Panc1 (cell line): ENCODE measurements at regions of chr3 and their contacts with region 1.

Region 1: GRCh38 chr3:136752422-136753325 is 496 bp upstream of the STAG1 start:
- DNase-seq: peak; percentile 91
- ATAC-seq: peak; percentile 91
- H3K4me3 ChIP-seq: peak overlapping the region; percentile 65 to 89
- H3K27ac ChIP-seq: peak overlapping the region; percentile 100
- H3K4me1 ChIP-seq: peaks cover 26% of the 10 kb centered on the region
- H3K27me3 ChIP-seq: no peaks in the 10 kb centered on the region
- CTCF ChIP-seq: no peak; the same call in none of the 2 replicates

Region 2: GRCh38 chr3:136186344-136186743 is 566.3 kb before region 1 on chr3:
- CTCF ChIA-PET with region 1: no interaction called
- POLR2A ChIA-PET with region 1: no interaction called
- in situ Hi-C with region 1: loop called (anchors 10 kb)
- intact Hi-C with region 1: no loop called
- DNase-seq: no peak
- ATAC-seq: peak; percentile 66
- H3K4me3 ChIP-seq: no peak overlapping the region
- H3K27ac ChIP-seq: no peak overlapping the region
- H3K4me1 ChIP-seq: peaks cover 56% of the 10 kb centered on the region
- H3K27me3 ChIP-seq: no peaks in the 10 kb centered on the region
- CTCF ChIP-seq: no peak

Region 3: DNA sequence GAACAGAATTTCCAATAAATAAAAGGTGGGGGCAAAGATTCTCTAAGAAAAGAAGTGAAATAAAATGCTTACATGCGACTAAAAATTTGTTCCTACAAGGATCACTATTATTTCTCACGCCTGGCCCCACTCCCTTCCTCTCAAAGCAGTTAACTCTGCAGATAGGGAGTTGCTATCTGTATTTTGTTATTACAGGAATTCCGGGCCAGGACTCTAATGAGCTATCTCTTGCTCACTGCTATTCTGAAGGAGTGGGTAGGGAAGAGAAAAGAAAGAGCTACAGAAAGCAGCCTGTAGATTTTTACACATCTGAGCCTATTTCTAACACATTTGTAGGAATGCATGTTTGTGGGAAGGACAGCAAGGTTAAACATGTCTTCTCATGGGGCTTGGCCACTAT is 362.1 kb before region 1 on chr3:
- CTCF ChIA-PET with region 1: interaction called, 53 read pairs
- POLR2A ChIA-PET with region 1: interaction called, 4 read pairs
- in situ Hi-C with region 1: no loop called
- intact Hi-C with region 1: loop called (anchors 5 kb)
- DNase-seq: no peak
- ATAC-seq: no peak
- H3K4me3 ChIP-seq: no peak overlapping the region
- H3K27ac ChIP-seq: no peak overlapping the region
- H3K4me1 ChIP-seq: no peaks in the 10 kb centered on the region
- H3K27me3 ChIP-seq: no peaks in the 10 kb centered on the region
- CTCF ChIP-seq: no peak

Region 4: DNA sequence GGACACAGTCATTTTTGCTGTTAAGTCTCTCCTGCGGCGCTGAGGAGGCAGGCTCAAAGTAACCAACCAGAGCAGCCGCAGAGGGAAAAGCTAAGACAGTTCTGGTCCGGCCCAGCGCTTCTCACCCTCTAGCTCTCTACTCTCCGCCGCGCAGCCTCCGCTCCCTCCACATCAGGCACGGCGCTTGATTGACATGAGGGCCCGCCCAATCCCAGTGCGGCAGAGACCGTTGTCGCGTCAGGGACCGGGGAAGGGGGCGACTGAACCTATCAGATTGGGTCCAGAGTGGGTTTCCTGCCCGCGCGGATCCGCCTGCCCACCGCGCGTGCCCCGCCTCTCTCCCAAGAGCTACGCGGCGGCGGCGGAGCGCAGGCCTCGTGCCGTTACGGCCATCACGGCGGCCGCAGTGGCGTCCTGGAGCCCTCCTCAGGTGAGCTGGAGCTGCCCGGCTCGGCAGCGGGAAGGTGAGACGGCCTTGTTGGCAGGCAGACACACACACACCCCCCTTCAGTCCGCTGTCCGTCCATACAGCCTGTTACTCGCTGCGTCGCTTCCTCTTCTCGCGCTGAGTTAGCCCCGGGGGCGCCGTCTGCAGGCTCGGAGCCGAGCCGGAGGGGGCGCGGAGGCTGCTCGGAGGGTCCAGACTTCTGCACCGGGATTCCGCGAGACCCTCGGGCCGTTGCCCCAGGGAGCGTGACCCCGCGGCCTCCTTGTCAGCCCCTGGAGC is 109.4 kb after region 1 on chr3 and contains the start of gene NCK1:
- CTCF ChIA-PET with region 1: interaction called, 3 read pairs
- POLR2A ChIA-PET with region 1: interaction called, 4 read pairs
- in situ Hi-C with region 1: no loop called
- intact Hi-C with region 1: loop called (anchors 5 kb)
- DNase-seq: peak; percentile 85
- ATAC-seq: peak; percentile 99
- H3K4me3 ChIP-seq: peak within 1 kb of the TSS; percentile 80 to 98
- H3K27ac ChIP-seq: peak within 1 kb of the TSS; percentile 95
- H3K4me1 ChIP-seq: peaks cover 9% of the 10 kb centered on the region
- H3K27me3 ChIP-seq: no peaks in the 10 kb centered on the region
- CTCF ChIP-seq: no peak; the same call in 1 of the 2 replicates
- total RNA-seq, gene NCK1: 43.5 TPM

Region 5: DNA sequence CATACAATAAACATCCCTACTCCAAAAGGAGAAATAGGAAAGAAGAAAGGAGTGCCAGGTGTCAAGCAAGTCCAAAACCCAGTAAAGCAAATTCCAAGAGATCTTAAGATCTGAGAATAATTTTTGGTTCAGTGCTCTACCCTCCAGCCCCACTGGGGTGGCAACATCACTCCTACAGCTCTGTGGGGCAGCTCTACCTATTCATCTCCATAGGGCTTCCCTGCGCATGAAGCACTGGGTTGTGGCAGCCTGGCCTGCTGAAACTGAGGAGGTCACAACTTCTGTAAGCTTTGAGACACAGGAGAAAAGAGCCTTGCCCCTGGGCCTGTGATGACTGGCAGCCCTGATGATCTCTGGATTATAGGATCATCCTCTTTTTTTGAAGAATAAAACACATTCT is 633.2 kb after region 1 on chr3:
- CTCF ChIA-PET with region 1: no interaction called
- POLR2A ChIA-PET with region 1: no interaction called
- in situ Hi-C with region 1: no loop called
- intact Hi-C with region 1: no loop called
- DNase-seq: no peak
- ATAC-seq: no peak
- H3K4me3 ChIP-seq: no peak overlapping the region
- H3K27ac ChIP-seq: no peak overlapping the region
- H3K4me1 ChIP-seq: no peaks in the 10 kb centered on the region
- H3K27me3 ChIP-seq: no peaks in the 10 kb centered on the region
- CTCF ChIP-seq: no peak

Region 6: DNA sequence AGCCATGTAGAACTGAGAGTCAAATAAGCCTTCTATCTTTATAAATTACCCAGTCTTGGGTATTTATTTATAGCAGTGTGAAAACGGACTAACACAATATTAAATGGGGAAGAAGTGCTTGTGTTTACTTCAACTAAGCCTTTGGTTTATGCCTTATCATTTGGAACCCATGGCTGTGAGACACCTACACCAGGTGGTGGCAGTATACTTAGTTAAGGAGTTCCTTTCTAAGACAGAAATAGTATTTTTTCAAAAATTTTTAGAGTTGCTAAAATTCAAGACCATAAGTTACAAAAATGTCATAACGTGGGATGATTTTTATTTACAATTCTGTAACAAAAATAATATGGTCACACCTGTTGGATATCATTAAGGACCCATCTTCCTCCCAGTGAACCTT is 656.9 kb after region 1 on chr3:
- CTCF ChIA-PET with region 1: no interaction called
- POLR2A ChIA-PET with region 1: no interaction called
- in situ Hi-C with region 1: no loop called
- intact Hi-C with region 1: no loop called
- DNase-seq: no peak
- ATAC-seq: no peak
- H3K4me3 ChIP-seq: no peak overlapping the region
- H3K27ac ChIP-seq: no peak overlapping the region
- H3K4me1 ChIP-seq: no peaks in the 10 kb centered on the region
- H3K27me3 ChIP-seq: no peaks in the 10 kb centered on the region
- CTCF ChIP-seq: peak; percentile 10; the same call in 1 of the 2 replicates

Region 7: DNA sequence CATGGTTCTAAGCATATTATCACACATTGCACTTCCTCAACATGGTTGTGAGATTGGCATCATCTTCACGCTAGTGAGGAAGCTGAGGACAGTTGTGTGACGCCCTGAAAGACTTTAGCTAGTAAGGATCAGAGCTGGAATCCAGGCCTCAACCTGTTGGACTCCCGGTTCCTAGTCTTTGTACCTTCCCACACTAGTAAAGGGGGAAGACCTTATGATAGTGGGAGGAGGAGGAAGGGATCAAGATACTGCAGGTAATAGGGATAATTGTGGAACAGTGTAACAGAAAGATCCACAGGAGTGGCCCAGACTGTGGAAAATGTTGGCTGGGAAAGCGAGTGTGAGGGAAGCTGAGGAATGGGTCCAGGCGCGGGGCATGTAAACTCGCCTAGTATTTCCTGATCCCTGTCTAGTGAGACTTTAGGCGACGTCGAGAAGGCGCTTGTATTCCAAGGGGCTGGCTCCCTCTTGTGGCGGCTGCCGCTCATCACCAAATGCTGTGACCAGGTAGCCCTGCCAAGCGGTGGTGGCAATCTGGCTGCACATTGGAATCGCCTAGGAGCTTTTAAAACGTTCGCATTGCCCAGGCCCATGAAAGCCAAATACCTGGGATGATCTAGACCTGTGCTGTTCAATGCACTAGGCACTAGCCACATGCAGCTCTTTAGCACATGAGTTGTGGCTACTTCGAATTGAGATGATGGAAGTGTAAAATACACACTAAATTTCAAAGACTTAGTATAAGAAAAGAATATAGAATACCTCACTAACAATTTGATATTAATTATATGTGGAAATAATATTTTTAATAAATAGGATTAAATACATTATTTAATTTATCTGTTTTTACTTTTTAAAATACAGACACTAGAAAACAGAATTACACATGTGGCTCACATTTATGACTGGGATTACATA is 1218.5 kb after region 1 on chr3:
- CTCF ChIA-PET with region 1: interaction called, 10 read pairs
- POLR2A ChIA-PET with region 1: no interaction called
- in situ Hi-C with region 1: no loop called
- intact Hi-C with region 1: no loop called
- DNase-seq: no peak
- ATAC-seq: peak; percentile 100
- H3K4me3 ChIP-seq: no peak overlapping the region
- H3K27ac ChIP-seq: no peak overlapping the region
- H3K4me1 ChIP-seq: peaks cover 2% of the 10 kb centered on the region; the same call in 1 of the 2 replicates
- H3K27me3 ChIP-seq: peaks cover 6% of the 10 kb centered on the region; the same call in 1 of the 2 replicates
- CTCF ChIP-seq: peak; percentile 97